PC-9 (cell line): ENCODE measurements at regions of chr6 and their contacts with region 1.

Region 1: DNA sequence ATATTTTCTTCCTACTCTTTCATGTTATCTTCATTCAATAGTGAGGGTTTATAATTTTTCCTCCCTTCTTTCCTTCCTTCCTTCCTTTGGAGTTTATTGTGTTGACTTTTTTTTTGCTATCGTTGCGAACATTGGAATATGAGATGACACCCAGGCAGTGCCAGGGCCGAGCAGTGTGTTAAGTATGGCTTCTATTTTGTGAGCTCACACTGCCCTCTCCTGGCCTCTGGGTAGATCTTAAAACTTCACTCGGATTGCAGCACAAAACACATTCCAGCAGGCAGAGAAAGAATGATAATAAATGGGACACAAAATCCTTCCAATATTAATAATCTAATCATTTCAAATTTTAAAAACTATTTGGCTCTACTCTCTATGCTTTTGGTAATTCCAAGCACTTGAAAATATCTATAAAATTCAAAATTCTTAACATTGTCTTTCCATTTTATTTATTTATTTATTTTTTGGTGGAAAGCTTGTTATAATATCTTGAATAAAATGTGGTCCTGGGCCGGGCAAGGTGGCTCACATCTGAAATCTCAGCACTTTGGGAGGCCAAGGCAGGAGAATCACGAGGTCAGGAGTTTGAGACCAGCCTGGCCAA is 147.4 kb upstream of the OLIG3 start:
- DNase-seq: peak; percentile 50 to 69
- H3K4me3 ChIP-seq: no peak overlapping the region
- H3K27ac ChIP-seq: no peak overlapping the region
- H3K4me1 ChIP-seq: peaks cover 15% of the 10 kb centered on the region
- H3K27me3 ChIP-seq: no peaks in the 10 kb centered on the region
- CTCF ChIP-seq: peak; percentile 96

Region 2: GRCh38 chr6:136846046-136846445 is 795.5 kb before region 1 on chr6:
- CTCF ChIA-PET with region 1: no interaction called
- POLR2A ChIA-PET with region 1: no interaction called
- intact Hi-C with region 1: loop called (anchors 1 kb)
- DNase-seq: peak; percentile 12 to 50
- H3K4me3 ChIP-seq: no peak overlapping the region
- H3K27ac ChIP-seq: no peak overlapping the region
- H3K4me1 ChIP-seq: no peaks in the 10 kb centered on the region
- H3K27me3 ChIP-seq: no peaks in the 10 kb centered on the region
- CTCF ChIP-seq: peak; percentile 89

Region 3: DNA sequence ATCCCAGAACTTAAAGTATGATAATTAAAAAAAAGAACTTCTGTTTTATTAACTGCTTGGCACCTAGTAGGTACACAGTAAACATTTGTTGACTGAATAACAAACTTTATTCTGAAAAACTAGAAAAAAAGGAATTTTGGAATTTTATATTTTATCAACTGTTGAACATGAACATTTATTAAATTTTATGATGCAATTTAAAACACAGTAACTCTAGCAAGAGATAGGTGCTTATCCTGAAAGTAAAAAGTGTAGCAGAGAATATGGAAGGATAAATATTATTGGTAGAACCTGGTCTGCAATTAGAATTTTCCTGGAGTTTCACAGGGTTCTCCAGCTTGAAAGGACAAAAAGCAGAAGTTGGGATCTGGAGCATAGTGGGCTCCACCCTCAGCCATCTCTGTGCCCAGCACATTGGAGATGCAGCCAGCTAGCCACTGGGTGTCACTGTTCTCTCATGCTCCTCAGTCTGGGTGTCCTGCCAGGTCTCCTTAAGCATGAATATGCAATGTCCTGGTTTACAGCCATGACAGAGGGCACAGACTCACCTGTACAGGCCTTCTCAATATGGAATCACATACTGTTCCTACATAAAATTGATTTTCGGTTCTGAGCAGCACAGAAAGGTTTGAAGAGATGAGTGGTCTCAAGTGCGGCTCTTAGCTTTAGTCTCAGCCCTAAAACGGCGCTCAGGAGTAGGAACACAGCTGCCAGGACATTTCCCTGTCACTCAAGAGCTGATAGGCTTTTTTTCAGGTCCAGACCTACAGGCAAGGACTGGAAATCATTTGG is 565.1 kb before region 1 on chr6:
- CTCF ChIA-PET with region 1: no interaction called
- POLR2A ChIA-PET with region 1: no interaction called
- intact Hi-C with region 1: loop called (anchors 1 kb)
- DNase-seq: peak; percentile 65 to 76
- H3K4me3 ChIP-seq: no peak overlapping the region
- H3K27ac ChIP-seq: no peak overlapping the region
- H3K4me1 ChIP-seq: no peaks in the 10 kb centered on the region
- H3K27me3 ChIP-seq: no peaks in the 10 kb centered on the region
- CTCF ChIP-seq: peak; percentile 91

Region 4: GRCh38 chr6:137271245-137272183 is 370.1 kb before region 1 on chr6:
- CTCF ChIA-PET with region 1: no interaction called
- POLR2A ChIA-PET with region 1: no interaction called
- intact Hi-C with region 1: loop called (anchors 2 kb)
- DNase-seq: peak in 1 of 2 experiments; percentile 54
- H3K4me3 ChIP-seq: no peak overlapping the region
- H3K27ac ChIP-seq: no peak overlapping the region
- H3K4me1 ChIP-seq: no peaks in the 10 kb centered on the region
- H3K27me3 ChIP-seq: peaks cover 3% of the 10 kb centered on the region; the same call in 1 of the 2 replicates
- CTCF ChIP-seq: peak; percentile 98

Region 5: DNA sequence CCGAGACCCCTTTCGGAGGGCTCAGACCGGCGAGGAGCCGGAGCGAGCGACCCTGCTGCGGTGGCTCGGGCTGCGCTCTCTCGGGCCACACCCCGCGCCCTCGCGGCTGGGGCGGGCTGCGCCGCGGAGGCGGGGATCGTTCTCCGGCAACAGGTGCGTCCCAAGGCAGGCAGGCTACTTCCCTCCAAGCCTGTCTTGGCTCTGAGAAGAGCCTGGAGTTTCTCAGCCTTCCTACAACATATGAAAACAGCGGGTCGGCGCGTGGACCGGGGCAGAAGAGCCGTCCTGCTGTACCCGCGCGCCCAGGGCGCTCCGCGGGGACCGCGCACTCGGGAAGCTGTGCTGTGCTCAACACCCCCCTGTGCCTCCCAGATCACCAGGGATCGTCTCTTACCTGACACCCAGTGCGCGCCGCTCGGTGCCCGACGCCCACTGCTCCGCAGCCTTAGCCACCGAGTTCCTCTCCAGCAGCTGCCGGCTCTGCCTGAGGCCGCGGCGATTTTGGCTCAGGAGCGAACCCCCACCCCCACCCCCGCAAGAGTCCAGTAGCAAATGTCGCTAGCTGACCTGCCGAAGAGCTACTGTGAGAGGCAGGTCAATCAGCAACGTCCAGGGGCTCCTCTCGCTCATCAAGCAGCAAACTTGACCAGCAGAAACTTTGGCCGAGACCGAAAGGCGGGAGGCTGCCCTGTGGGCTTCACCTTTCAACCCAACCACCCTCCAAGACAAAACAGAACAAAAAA is 143.7 kb before region 1 on chr6:
- CTCF ChIA-PET with region 1: no interaction called
- POLR2A ChIA-PET with region 1: no interaction called
- intact Hi-C with region 1: no loop called
- DNase-seq: no peak
- H3K4me3 ChIP-seq: no peak overlapping the region
- H3K27ac ChIP-seq: no peak overlapping the region
- H3K4me1 ChIP-seq: no peaks in the 10 kb centered on the region
- H3K27me3 ChIP-seq: no peaks in the 10 kb centered on the region
- CTCF ChIP-seq: no peak

Region 6: DNA sequence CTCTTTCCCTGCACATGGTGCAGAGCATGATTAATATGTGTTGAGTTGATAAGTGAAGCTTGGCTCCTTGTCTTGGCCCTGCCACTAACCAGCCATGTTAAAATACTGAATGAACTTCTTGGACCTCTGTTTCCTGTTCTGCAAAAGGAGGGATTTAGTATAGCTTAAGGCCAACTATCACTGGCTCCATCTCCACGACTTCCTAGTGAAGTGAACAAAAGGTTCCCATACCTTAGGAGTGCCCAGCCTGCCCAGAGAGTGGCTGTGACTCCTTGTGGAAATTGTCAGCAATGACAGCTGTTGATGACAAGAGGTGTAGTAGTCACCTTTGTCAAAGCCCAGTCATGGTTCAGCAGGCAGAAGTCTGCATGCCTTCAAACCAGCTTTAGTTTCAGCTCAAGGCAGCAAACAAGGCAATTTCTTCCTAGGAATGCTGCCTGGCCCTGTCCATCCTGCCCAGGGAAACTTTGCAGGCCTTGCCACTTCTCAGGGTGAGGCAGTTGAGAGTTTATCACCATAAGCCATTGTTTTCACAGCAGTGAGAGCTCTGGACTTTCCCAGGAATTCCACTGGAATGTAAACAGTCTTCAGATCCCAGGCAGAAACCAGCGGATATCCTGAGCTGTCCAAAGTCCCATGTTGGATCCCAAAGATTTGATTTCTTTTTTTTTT is 55.8 kb after region 1 on chr6:
- CTCF ChIA-PET with region 1: interaction called, 4 read pairs
- POLR2A ChIA-PET with region 1: no interaction called
- intact Hi-C with region 1: loop called (anchors 5 kb)
- DNase-seq: peak; percentile 56 to 80
- H3K4me3 ChIP-seq: no peak overlapping the region
- H3K27ac ChIP-seq: peak overlapping the region; percentile 40
- H3K4me1 ChIP-seq: peaks cover 25% of the 10 kb centered on the region
- H3K27me3 ChIP-seq: no peaks in the 10 kb centered on the region
- CTCF ChIP-seq: peak; percentile 67